Left lung (tissue), 14 donors: ENCODE measurements at regions of chr13 and their contacts with region 1.

Region 1: GRCh38 chr13:49996951-49997895 is at the start of gene TRIM13:
- DNase-seq: peak; percentile 90 to 95 (median 93)
- ATAC-seq: peak; percentile 85
- H3K4me3 ChIP-seq: peak within 1 kb of the TSS; percentile 76
- H3K27ac ChIP-seq: peak within 1 kb of the TSS; percentile 99
- H3K4me1 ChIP-seq: peaks cover 22 to 52% of the 10 kb centered on the region in 2 donors
- H3K27me3 ChIP-seq: no peaks in the 10 kb centered on the region
- CTCF ChIP-seq: peak; percentile 51 to 59
- polyA plus RNA-seq, gene TRIM13: 46.9 to 55.6 (median 50.2) TPM

Region 2: DNA sequence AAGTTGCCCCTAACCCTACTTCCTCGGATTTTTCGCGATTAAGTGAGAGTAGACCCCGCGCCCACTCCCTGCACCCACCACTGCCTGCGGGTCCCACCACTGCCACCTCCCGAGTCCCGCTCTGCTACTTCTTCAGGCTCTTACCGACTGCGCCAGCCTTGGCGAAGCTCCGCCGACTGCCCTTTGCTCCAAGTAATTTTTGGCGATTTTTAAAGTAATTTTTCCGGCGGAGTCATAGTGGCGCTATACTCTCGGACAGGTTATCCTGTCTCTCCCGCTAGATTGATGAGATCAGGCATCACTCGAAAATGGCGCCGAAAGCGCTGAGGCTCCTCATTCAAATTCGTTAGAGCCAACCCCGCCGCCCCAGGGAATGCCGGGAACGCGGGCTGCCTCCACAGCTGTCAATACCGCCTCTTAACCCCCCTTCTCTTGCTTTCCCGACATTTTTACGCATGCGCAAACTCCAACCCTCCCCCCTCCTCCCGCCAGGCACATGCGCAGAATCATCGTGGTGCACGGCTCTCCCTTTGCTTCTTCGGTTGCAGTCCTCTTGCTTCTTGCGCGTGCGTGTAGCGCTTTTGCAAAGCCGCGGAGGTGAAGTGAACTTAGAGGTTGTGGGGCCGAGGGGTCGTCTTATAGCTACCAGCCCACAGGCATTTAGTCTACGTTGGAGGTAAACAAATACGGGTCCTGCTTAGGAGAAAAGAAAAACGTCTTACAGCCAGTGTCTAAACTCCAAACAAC is 84.6 kb after region 1 on chr13:
- intact Hi-C with region 1: loop called in 1 of 2 experiments (anchors 5 kb)
- DNase-seq: peak; percentile 97 to 99 (median 98)
- ATAC-seq: peak; percentile 86
- H3K4me3 ChIP-seq: peak overlapping the region; percentile 60 to 66
- H3K27ac ChIP-seq: peak overlapping the region; percentile 83 to 91
- H3K4me1 ChIP-seq: peaks cover 15 to 71% of the 10 kb centered on the region in 2 donors
- H3K27me3 ChIP-seq: no peaks in the 10 kb centered on the region
- CTCF ChIP-seq: no peak